Endothelial cell of umbilical vein (primary cell): ENCODE measurements at regions of chr20 and their contacts with region 1.

Region 1: DNA sequence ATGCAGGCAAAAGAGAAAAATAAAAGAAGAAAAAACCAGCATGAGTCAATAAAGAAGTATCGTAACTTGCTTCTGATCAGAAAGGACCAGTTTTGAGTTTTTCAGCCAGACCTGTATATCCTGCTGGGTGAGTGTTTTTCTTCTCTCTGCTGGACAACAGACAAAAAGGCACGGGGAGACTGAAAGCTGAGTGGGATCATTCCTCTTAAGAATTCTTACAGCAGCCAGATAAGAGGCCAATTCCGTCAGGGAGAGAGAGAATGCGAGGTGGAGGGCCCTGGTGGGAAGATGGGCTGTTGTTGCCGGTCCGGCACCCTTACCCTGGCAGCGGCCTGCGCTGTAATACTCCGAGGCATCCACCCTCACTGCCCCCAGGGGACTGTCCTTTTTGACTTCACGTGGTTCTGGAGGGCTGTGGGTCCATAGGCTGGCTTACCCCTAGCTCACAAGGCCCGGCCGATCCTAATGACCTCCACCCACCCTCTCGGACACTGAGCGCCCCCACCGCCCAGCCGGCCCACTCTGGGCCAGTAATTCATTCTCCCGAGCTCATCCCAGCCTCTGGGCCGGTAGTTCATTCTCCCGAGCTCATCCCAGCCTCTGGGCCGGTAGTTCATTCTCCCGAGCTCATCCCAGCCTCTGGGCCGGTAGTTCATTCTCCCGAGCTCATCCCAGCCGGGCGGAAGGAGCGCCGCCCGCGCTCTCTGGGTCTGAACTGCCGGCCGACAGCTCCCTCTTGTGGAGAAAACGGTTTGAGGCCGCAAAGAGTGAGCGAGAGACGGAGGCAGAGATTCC is 118.3 kb upstream of the SIRPA start:
- DNase-seq: peak; percentile 81
- H3K4me3 ChIP-seq: peak overlapping the region; percentile 41 to 88 (median 77)
- H3K27ac ChIP-seq: peak overlapping the region; percentile 38
- H3K4me1 ChIP-seq: peaks cover 7% of the 10 kb centered on the region
- H3K27me3 ChIP-seq: peaks cover 0 to 6% of the 10 kb centered on the region in 2 experiments
- CTCF ChIP-seq: peak; percentile 67 to 85
- POLR2A ChIP-seq: peak; percentile 26

Region 2: DNA sequence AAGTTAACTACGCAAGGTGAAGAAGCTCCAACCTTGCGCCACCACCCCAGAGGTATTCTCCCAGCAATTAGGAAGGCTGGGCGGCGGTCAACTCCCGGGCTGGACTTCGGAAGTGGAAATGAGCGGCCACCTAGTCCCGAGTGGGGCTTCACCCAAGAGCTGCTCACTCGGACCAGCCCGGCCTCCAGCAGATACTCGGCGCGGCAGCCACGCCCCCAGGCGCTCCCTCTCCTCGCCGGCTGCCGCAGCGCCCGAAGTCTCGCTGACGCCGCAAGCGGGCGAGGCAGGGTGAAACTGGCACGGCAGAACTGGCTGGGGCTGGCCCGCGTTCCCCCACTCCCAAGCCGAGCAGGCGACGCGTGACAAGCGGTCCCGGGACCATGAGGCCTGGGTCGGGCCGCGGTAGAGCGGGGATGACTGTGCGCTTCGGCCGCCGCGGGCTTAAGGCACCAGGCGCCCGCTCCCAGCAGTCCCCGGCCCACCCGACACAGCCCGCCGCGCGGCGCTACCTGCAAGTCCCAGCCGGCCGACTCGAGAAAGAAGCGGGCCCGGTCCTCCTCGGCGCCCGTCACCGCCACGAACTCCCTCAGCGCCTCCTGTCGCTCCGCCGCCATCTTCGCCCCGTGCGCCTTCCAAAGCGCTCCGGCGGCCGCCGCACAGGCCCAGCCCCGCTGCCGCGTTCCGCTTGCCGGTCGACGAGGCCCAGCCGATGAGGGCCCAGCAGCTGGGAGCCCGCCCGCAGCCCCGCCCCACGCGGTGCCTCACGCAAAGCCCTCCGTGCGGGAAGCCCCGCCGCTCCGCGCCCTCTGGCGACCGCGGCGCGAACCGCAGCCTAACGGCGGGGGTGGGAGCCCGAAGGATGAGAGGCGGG is 310.4 kb before region 1 on chr20 and contains the start of gene NSFL1C:
- CTCF ChIA-PET with region 1: interaction called, 18 read pairs
- POLR2A ChIA-PET with region 1: no interaction called
- dilution Hi-C with region 1: no loop called
- intact Hi-C with region 1: loop called (anchors 1 kb)
- DNase-seq: peak; percentile 94
- H3K4me3 ChIP-seq: peak within 1 kb of the TSS; percentile 51 to 95 (median 75)
- H3K27ac ChIP-seq: peak within 1 kb of the TSS; percentile 78
- H3K4me1 ChIP-seq: peaks cover 35% of the 10 kb centered on the region
- H3K27me3 ChIP-seq: no peaks in the 10 kb centered on the region
- CTCF ChIP-seq: peak; percentile 69 to 91
- POLR2A ChIP-seq: peak; percentile 76
- total RNA-seq, gene NSFL1C: 95.7 and 107 TPM in 2 replicates

Region 3: DNA sequence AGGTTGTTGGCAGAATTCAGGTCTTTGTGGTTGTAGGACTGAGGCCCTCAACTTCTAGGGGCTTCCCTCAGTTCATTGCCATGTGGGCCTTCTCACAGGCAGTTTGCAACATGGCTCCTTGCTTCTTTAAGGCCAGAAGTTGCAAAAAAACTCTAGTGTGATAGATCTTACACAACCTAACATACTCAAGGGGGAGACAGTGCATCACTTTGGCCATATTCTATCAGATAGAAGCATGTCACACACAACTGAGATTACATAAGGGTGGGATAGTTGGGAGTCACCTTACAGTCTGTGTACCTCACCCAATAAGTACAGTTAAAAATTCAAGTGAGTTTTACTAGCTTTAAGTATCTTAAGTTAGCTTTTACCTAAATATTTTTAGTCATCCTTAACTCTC is 220.9 kb before region 1 on chr20:
- CTCF ChIA-PET with region 1: interaction called, 17 read pairs
- POLR2A ChIA-PET with region 1: no interaction called
- dilution Hi-C with region 1: no loop called
- intact Hi-C with region 1: no loop called
- DNase-seq: peak; percentile 15
- H3K4me3 ChIP-seq: no peak overlapping the region
- H3K27ac ChIP-seq: no peak overlapping the region
- H3K4me1 ChIP-seq: peaks cover 2% of the 10 kb centered on the region
- H3K27me3 ChIP-seq: peaks cover 0 to under 1% of the 10 kb centered on the region in 2 experiments
- CTCF ChIP-seq: no peak
- POLR2A ChIP-seq: no peak

Region 4: GRCh38 chr20:1764136-1765033 is 12.5 kb before region 1 on chr20:
- CTCF ChIA-PET with region 1: interaction called, 79 read pairs
- POLR2A ChIA-PET with region 1: no interaction called
- dilution Hi-C with region 1: no loop called
- intact Hi-C with region 1: loop called (anchors 1 kb)
- DNase-seq: peak; percentile 76
- H3K4me3 ChIP-seq: no peak overlapping the region
- H3K27ac ChIP-seq: no peak overlapping the region
- H3K4me1 ChIP-seq: peaks cover 3% of the 10 kb centered on the region
- H3K27me3 ChIP-seq: no peaks in the 10 kb centered on the region
- CTCF ChIP-seq: peak; percentile 84 to 86
- POLR2A ChIP-seq: no peak

Region 5: GRCh38 chr20:1894951-1895673 is 118.2 kb after region 1 on chr20 and contains the start of gene SIRPA:
- CTCF ChIA-PET with region 1: interaction called, 6 read pairs
- POLR2A ChIA-PET with region 1: no interaction called
- dilution Hi-C with region 1: no loop called
- intact Hi-C with region 1: loop called (anchors 1 kb)
- DNase-seq: peak; percentile 66
- H3K4me3 ChIP-seq: peak within 1 kb of the TSS; percentile 70 to 85 (median 70)
- H3K27ac ChIP-seq: peak within 1 kb of the TSS; percentile 68
- H3K4me1 ChIP-seq: peaks cover 8% of the 10 kb centered on the region
- H3K27me3 ChIP-seq: no peaks in the 10 kb centered on the region
- CTCF ChIP-seq: no peak
- POLR2A ChIP-seq: no peak
- total RNA-seq, gene SIRPA: 58.3 and 59.2 TPM in 2 replicates

Region 6: GRCh38 chr20:2172305-2173175 is 395.7 kb after region 1 on chr20:
- CTCF ChIA-PET with region 1: interaction called, 12 read pairs
- POLR2A ChIA-PET with region 1: no interaction called
- dilution Hi-C with region 1: no loop called
- intact Hi-C with region 1: no loop called
- DNase-seq: peak; percentile 54
- H3K4me3 ChIP-seq: no peak overlapping the region
- H3K27ac ChIP-seq: no peak overlapping the region
- H3K4me1 ChIP-seq: no peaks in the 10 kb centered on the region
- H3K27me3 ChIP-seq: peaks cover 0 to 8% of the 10 kb centered on the region in 2 experiments
- CTCF ChIP-seq: peak; percentile 88 to 90
- POLR2A ChIP-seq: no peak